ENCODE measurements at regions of chr17 and their contacts with region 1.

Region 1: DNA sequence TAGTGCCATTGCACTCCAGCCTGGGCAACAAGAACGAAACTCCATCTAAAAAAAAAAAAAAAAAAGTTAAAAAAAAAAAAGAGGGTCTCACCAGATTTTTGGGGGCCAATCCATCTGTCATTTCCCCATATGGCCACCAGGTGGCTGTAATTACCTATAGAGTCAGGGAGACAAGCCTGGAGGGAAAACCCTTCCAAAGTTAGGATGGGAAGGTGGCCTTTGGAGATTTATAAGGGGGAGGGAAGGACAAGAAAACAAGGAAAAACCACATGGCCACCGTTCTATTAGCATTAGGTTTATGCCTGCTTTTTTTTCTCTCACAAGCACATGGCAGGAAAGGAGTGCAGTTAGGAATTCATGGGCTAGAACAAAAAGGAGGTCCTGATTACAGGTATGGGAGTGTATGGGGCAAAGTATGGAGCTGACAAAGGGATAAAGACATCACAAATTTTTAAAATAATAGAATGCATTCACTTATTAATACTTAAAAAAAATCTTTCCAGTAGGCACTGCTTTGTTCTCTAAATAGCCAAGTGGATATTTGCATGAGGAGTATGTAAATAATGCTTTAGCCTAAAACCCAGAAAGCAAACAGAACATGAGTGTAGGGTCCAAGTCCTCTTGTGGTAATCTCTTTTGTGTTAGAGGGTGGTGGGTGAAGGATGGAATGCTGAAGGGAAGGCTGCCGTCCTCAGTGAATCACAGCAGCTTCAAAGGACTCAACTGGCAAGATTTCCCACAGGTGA is 5.1 kb downstream of the CYB5D1 start:
- DNase-seq: peak in 25 of 42 donors; percentile 14 to 89 (median 64)

Region 2: DNA sequence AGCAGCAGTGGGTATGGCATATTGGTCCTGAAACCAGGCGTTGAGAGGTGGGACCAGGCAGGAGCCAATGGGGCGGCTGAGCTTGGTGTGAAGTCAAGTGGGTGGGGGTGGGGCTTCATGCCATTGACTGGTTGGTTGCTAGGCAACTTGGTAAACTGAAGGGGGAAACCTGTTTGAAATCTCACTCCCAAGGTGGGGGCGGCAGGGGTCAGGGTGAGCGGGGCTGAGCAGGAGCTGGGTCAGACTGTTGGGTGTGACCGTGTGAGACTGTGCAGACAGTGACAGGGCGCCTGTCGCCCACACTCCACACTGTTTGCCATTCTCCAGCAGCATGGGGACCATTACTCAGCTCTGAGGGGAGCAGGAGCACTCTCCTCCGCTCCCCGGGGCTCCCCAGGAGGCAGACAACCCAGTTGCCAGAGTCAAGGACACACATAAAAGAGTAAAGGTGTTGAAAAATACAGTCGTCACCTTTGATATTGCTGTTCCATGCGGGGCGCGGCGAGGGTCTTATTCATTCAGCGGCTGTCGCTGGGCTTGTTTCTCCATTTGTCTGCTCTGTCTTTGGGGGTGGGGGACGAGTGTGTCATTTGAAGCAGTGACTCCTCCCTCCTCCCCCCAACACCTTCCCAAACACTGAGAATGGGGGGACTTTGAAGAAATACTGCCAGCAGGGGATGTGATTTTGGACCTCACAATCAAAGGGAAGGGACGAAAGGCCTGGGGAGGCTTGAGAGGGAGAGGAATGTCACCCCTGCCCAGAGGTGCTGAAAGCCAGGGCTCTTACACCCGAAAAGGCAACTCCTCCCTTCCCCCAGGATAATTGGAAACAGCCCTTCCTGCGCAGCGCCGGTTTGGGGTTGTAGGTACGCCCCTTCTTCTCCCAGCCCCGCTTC is 159.0 kb before region 1 on chr17:
- intact Hi-C with region 1: no loop called
- DNase-seq: peak in 40 of 42 donors; percentile 26 to 91 (median 67)

Region 3: GRCh38 chr17:7844292-7845154 is 18.3 kb before region 1 on chr17:
- intact Hi-C with region 1: no loop called
- DNase-seq: peak; percentile 87 to 98 (median 94)

Region 4: GRCh38 chr17:7897773-7898172 is 34.9 kb after region 1 on chr17:
- intact Hi-C with region 1: loop called (anchors 2 kb)
- DNase-seq: peak in 22 of 42 donors; percentile 18 to 77 (median 44)

Region 5: DNA sequence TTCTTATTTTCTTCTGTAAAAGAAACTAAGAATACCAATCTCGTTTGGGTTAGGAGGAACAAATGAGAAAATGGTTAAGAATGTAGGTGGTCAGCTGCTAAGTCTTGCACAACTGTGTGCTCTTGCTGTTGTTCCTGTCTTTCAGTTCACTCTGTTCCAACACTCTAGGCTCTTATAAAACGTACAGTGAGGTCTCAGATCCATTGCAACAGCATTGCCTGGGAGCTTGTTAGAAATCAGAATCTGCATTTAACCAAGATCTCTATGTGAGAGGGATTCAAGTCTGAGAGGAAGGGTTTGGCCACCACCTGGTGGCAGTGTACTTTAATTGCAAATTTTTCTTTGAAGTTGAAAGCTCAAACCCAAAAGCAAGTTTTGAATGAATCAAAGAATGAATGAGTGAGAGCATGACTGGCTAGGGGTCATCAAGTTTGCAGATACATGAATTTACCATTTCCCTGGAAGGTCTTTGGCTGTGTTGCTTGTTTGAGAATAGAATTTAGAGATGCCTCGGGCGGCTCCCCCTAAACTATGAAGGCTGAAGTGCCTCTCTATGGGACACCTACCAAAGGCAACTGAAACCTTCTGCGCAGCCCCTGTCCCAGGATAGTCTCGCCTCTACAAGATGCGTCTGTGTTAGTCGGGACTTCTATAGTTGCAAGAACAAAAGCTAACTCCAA is 178.5 kb after region 1 on chr17:
- intact Hi-C with region 1: loop called (anchors 5 kb)
- DNase-seq: peak in 27 of 42 donors; percentile 15 to 69 (median 40)

Measured in head of caudate nucleus (tissue), 42 donors.